Heart right ventricle (tissue), 16 donors: ENCODE measurements at regions of chr21 and their contacts with region 1.

Region 1: DNA sequence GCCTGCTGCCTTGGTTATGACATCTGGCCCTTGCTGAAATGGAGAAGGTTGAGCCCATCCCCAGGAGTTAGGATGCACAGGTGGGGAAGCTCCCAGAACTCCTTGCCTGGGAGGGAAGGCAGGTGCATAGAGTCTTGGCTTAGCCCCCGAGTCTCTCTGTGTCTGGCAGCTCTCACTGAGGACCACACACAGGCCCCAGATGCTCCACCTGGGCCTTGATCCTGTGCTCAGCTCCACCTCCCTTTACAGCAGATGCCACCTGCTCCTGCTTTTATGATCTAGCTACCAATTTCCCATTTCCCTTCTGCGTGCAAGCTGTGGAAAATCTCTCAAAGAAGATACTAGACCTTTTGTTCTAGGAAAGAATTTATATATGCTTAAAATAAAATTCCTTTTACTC is 28.8 kb upstream of the KCNJ6 start:
- DNase-seq: no peak
- ATAC-seq: no peak
- H3K4me3 ChIP-seq: no peak overlapping the region
- H3K27ac ChIP-seq: no peak overlapping the region
- H3K4me1 ChIP-seq: peaks cover 0 to 7% (median 0%) of the 10 kb centered on the region in 9 donors
- H3K27me3 ChIP-seq: peaks cover 0 to 7% (median 0%) of the 10 kb centered on the region in 7 donors
- CTCF ChIP-seq: no peak

Region 2: DNA sequence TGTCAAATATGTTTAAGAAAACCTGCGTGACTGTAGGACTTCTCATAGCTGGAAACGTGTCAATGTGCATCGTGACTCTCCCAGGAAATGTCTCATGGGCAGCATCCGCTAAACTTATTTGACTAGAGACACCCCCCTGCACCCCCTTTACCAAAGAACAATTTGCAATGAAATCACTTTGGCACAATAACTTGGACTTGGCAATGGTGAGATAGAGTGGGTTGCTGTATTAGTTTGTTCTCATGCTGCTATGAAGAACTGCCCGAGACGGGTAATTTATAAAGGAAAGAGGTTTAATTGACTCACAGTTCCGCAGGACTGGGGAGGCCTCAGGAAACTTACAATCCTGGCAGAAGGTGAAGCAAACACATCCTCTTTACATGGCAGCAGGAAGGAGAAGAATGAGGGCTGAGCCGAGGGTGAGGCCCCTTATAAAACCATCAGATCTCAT is 1479.0 kb before region 1 on chr21:
- intact Hi-C with region 1: loop called in 1 of 10 experiments (anchors 5 kb)
- DNase-seq: no peak
- ATAC-seq: no peak
- H3K4me3 ChIP-seq: no peak overlapping the region
- H3K27ac ChIP-seq: no peak overlapping the region
- H3K4me1 ChIP-seq: peaks cover 0 to 5% (median 4%) of the 10 kb centered on the region in 9 donors
- H3K27me3 ChIP-seq: peaks cover 0 to 12% (median 0%) of the 10 kb centered on the region in 7 donors
- CTCF ChIP-seq: no peak

Region 3: GRCh38 chr21:36769051-36769839 is 1175.8 kb before region 1 on chr21:
- intact Hi-C with region 1: no loop called
- DNase-seq: no peak
- ATAC-seq: peak in 6 of 8 donors; percentile 29 to 60 (median 38)
- H3K4me3 ChIP-seq: no peak overlapping the region
- H3K27ac ChIP-seq: peak overlapping the region in 2 of 10 donors; percentile 2 to 34
- H3K4me1 ChIP-seq: peaks cover 0 to 31% (median 21%) of the 10 kb centered on the region in 9 donors
- H3K27me3 ChIP-seq: no peaks in the 10 kb centered on the region
- CTCF ChIP-seq: no peak

Region 4: DNA sequence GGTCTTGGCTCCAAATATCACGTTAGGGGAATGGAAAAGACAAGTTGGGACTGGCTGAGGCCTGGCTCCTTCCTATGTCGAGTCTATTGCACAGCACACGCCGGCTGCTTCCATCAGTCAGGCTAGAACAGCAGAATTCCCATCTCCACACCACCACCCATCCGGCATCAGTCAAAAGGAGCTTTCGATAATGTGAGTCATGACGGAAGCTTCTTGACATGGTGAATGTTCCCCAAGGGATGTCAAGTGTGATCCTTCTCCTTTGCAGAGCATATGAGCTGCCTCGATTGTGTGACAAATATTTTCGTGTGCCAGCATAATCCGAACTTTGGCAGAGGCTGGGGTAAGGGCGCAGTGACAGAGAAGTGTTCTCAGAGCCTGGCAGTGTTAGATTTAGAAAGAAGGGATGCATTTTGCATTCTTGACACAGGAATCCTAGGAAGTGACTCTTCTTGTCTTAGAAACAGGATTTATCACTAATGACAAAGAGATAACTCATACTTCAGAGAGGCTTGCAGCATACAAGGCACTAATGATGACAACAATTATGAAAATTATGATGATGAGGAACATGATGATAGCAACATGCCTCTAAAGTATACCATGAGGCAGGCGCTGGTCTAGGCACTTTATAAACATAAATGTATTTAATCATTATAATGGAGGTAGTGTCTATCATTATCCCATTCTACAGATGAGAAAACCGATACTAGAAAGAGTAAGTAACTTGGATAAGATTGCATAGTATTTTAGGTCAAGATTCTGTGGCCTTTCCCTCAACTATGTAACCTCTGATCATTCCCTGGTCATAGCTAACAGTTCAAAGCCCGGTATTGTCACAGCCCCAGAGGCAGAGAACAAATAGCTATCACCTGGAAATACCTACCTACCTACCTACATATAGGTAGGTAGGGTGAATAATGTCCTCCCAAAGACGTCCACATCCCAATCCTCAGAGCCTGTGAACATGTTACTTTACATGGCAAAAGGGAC is 163.7 kb before region 1 on chr21:
- intact Hi-C with region 1: no loop called
- DNase-seq: no peak
- ATAC-seq: no peak
- H3K4me3 ChIP-seq: no peak overlapping the region
- H3K27ac ChIP-seq: no peak overlapping the region
- H3K4me1 ChIP-seq: no peaks in the 10 kb centered on the region
- H3K27me3 ChIP-seq: peaks cover 0 to 4% (median 0%) of the 10 kb centered on the region in 7 donors
- CTCF ChIP-seq: no peak

Region 5: DNA sequence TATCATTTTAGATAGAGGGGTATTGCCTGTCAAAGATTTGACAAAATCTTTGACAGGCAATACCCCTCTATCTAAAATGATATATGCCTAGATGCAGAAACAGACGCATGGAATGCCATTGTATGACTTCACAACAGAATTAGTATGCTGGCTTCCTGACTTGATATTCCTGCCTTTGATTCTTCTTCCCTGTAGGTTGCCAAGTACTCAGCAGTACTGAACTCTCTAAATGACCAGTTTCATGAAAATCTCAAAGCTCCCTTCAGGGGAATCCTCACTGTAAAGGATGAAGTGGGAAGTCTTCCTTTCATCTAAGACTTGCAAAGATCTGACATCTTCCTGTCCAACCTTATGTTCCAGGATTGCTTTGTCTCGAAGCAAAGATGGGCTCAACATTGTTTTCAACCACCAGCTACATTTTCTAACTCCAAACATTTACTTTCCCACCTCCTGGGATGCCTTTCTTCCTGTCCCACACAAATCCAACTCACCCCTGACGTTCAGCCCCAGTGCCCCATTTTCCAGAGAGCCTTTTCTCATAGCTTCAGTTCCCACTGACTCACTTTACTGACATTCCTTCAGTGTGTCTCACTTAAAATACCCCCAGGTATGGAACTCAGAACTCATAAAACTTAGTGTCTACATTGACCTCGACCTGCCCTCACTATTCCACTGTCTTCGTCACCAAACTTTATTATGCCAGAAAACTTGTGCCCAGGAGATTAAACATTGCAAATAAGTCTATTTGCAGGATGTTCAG is 38.5 kb after region 1 on chr21:
- intact Hi-C with region 1: no loop called
- DNase-seq: no peak
- ATAC-seq: no peak
- H3K4me3 ChIP-seq: no peak overlapping the region
- H3K27ac ChIP-seq: no peak overlapping the region
- H3K4me1 ChIP-seq: no peaks in the 10 kb centered on the region
- H3K27me3 ChIP-seq: peaks cover 0 to 27% (median 11%) of the 10 kb centered on the region in 7 donors
- CTCF ChIP-seq: no peak